ENCODE measurements at regions of chr4 and their contacts with region 1.

Region 1: GRCh38 chr4:78775303-78776030 is 683 bp upstream of the BMP2K start:
- DNase-seq: no peak
- ATAC-seq: peak; percentile 60
- H3K4me3 Mint-ChIP-seq: peak overlapping the region; percentile 97
- H3K27ac Mint-ChIP-seq: peak overlapping the region; percentile 99
- H3K4me1 Mint-ChIP-seq: peaks cover 19% of the 10 kb centered on the region
- H3K27me3 Mint-ChIP-seq: no peaks in the 10 kb centered on the region
- CTCF ChIP-seq: no peak

Region 2: GRCh38 chr4:77819843-77820648 is 955.4 kb before region 1 on chr4:
- CTCF ChIA-PET with region 1: no interaction called
- POLR2A ChIA-PET with region 1: interaction called, 5 read pairs
- intact Hi-C with region 1: loop called (anchors 2 kb)
- DNase-seq: peak; percentile 92
- ATAC-seq: peak; percentile 74
- H3K4me3 Mint-ChIP-seq: peak overlapping the region; percentile 95
- H3K27ac Mint-ChIP-seq: peak overlapping the region; percentile 96
- H3K4me1 Mint-ChIP-seq: peaks cover 57% of the 10 kb centered on the region
- H3K27me3 Mint-ChIP-seq: no peaks in the 10 kb centered on the region
- CTCF ChIP-seq: no peak

Region 3: GRCh38 chr4:78612398-78613178 is 162.9 kb before region 1 on chr4:
- CTCF ChIA-PET with region 1: interaction called, 19 read pairs
- POLR2A ChIA-PET with region 1: interaction called, 102 read pairs
- intact Hi-C with region 1: loop called (anchors 1 kb)
- DNase-seq: no peak
- ATAC-seq: peak; percentile 28
- H3K4me3 Mint-ChIP-seq: peak overlapping the region; percentile 15
- H3K27ac Mint-ChIP-seq: peak overlapping the region; percentile 87
- H3K4me1 Mint-ChIP-seq: peaks cover 67% of the 10 kb centered on the region
- H3K27me3 Mint-ChIP-seq: no peaks in the 10 kb centered on the region
- CTCF ChIP-seq: peak; percentile 28

Region 4: GRCh38 chr4:78644744-78645330 is 130.6 kb before region 1 on chr4:
- CTCF ChIA-PET with region 1: interaction called, 8 read pairs
- POLR2A ChIA-PET with region 1: interaction called, 41 read pairs
- intact Hi-C with region 1: loop called (anchors 1 kb)
- DNase-seq: no peak
- ATAC-seq: peak; percentile 98
- H3K4me3 Mint-ChIP-seq: peak overlapping the region; percentile 26
- H3K27ac Mint-ChIP-seq: peak overlapping the region; percentile 53
- H3K4me1 Mint-ChIP-seq: peaks cover 70% of the 10 kb centered on the region
- H3K27me3 Mint-ChIP-seq: no peaks in the 10 kb centered on the region
- CTCF ChIP-seq: peak; percentile 39

Region 5: DNA sequence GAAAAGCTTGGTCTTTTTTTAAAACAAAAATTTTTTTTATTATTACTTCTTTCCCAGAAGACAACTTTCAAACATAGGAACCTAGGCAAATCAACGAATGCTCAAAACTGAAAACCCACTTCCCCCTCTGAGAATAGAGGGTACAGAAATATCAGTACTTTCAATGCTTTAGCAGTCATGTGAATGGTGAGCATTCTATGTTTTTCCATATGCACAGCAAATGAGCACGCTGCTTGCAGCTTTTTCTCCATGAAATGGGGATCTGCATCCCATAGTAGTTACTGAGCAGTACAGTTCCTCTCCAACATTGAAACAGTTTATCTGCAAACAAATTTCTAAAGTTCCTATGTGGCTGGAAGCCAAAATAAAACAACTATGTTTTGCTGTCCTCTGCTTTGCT is 107.7 kb before region 1 on chr4:
- CTCF ChIA-PET with region 1: no interaction called
- POLR2A ChIA-PET with region 1: interaction called, 18 read pairs
- intact Hi-C with region 1: loop called (anchors 2 kb)
- DNase-seq: no peak
- ATAC-seq: peak; percentile 79
- H3K4me3 Mint-ChIP-seq: peak overlapping the region; percentile 54
- H3K27ac Mint-ChIP-seq: peak overlapping the region; percentile 83
- H3K4me1 Mint-ChIP-seq: peaks cover 85% of the 10 kb centered on the region
- H3K27me3 Mint-ChIP-seq: no peaks in the 10 kb centered on the region
- CTCF ChIP-seq: no peak

Region 6: GRCh38 chr4:78737035-78737434 is 38.4 kb before region 1 on chr4:
- CTCF ChIA-PET with region 1: no interaction called
- POLR2A ChIA-PET with region 1: interaction called, 18 read pairs
- intact Hi-C with region 1: no loop called
- DNase-seq: no peak
- ATAC-seq: no peak
- H3K4me3 Mint-ChIP-seq: no peak overlapping the region
- H3K27ac Mint-ChIP-seq: peak overlapping the region; percentile 87
- H3K4me1 Mint-ChIP-seq: peaks cover 61% of the 10 kb centered on the region
- H3K27me3 Mint-ChIP-seq: no peaks in the 10 kb centered on the region
- CTCF ChIP-seq: no peak

Region 7: GRCh38 chr4:78845472-78845871 is 70.0 kb after region 1 on chr4:
- CTCF ChIA-PET with region 1: no interaction called
- POLR2A ChIA-PET with region 1: interaction called, 8 read pairs
- intact Hi-C with region 1: loop called (anchors 5 kb)
- DNase-seq: no peak
- ATAC-seq: peak; percentile 28
- H3K4me3 Mint-ChIP-seq: peak overlapping the region; percentile 38
- H3K27ac Mint-ChIP-seq: peak overlapping the region; percentile 50
- H3K4me1 Mint-ChIP-seq: peaks cover 40% of the 10 kb centered on the region
- H3K27me3 Mint-ChIP-seq: no peaks in the 10 kb centered on the region
- CTCF ChIP-seq: no peak

Measured in activated B cell treated with CpG ODN at 0.5 μM for 24 hours (primary cell).